ENCODE measurements at regions of chr20 and their contacts with region 1.

Region 1: DNA sequence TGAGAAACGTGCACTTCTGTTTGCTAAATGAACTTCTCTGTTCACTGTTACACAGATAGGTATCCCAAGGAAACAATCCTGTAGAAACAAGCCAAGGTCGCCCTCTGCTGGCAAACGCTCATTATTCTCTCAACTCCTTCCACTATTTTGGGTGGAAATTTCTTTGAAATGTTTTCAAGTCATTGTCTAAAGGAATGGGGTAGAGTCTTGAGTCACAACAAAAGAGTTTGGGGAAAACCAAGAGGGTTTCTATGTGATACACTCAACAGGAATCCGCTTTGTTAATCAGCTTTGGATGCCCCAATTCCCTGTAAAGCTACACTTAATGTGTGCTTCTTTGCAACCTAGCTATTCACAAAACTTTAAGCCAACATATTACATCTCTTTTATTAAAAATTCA is 4.6 kb upstream of the RAE1 start:
- DNase-seq: peak; percentile 87 to 90
- H3K4me3 ChIP-seq: no peak overlapping the region
- H3K27ac ChIP-seq: no peak overlapping the region
- H3K4me1 ChIP-seq: no peaks in the 10 kb centered on the region
- H3K27me3 ChIP-seq: no peaks in the 10 kb centered on the region
- CTCF ChIP-seq: peak; percentile 53 to 87 (median 81)
- POLR2A ChIP-seq: no peak

Region 2: DNA sequence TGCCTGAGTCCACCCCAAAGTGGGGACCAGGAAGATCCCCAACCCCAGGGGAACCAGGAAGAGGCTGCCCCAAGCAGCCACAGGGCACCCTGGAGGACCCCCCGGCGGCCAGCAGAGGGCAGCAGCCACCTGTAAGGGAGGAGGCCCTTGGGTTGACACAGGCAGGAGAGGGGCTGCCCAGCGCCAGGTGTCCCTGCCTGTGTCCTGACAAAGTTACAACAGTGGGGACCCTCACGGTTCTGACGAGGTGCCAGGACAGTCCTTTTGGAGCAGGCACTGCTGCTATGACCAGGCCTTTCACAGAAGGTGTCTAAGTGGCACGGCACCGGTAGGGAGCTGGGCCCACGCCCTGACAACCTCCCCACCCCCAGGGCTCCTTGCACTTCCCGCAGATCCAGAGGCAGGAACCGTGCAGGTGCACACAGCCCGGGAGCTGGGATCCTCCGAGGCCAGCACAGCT is 256.8 kb before region 1 on chr20:
- intact Hi-C with region 1: loop called (anchors 2 kb)
- DNase-seq: peak; percentile 80 to 86
- H3K4me3 ChIP-seq: no peak overlapping the region
- H3K27ac ChIP-seq: no peak overlapping the region
- H3K4me1 ChIP-seq: no peaks in the 10 kb centered on the region
- H3K27me3 ChIP-seq: no peaks in the 10 kb centered on the region
- CTCF ChIP-seq: peak; percentile 72 to 99 (median 94)
- POLR2A ChIP-seq: no peak

Region 3: GRCh38 chr20:57231951-57232428 is 114.5 kb before region 1 on chr20:
- intact Hi-C with region 1: no loop called
- DNase-seq: no peak
- H3K4me3 ChIP-seq: no peak overlapping the region
- H3K27ac ChIP-seq: no peak overlapping the region
- H3K4me1 ChIP-seq: peaks cover 45 to 50% of the 10 kb centered on the region in 2 donors
- H3K27me3 ChIP-seq: no peaks in the 10 kb centered on the region
- CTCF ChIP-seq: no peak
- POLR2A ChIP-seq: no peak

Measured in thyroid gland (tissue), 4 donors.